ENCODE measurements at regions of chr2 and their contacts with region 1.

Region 1: DNA sequence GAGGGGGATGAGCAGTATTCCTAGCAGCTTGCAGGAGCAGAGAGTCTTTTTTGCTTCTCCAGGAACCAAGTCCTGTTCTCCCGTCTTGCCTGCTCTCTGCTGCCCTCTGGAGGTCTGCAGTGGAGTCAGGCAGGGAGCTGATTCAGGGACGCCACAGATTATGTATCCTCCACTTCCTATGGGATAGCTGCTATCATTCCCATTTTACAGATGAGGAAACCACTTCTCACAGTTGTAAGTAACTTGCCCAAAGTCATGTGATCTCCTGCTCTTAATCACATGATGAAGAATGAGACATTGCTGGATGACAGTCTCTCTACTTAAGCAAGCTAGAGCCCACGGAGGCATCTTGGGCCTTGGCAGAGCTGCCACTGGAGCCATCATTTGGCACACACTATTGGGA is 8.3 kb downstream of the SLC4A5 start:
- DNase-seq: peak; percentile 42
- H3K4me3 ChIP-seq: no peak overlapping the region
- H3K27ac ChIP-seq: no peak overlapping the region
- H3K27me3 ChIP-seq: peaks cover 19% of the 10 kb centered on the region
- CTCF ChIP-seq: peak; percentile 95

Region 2: DNA sequence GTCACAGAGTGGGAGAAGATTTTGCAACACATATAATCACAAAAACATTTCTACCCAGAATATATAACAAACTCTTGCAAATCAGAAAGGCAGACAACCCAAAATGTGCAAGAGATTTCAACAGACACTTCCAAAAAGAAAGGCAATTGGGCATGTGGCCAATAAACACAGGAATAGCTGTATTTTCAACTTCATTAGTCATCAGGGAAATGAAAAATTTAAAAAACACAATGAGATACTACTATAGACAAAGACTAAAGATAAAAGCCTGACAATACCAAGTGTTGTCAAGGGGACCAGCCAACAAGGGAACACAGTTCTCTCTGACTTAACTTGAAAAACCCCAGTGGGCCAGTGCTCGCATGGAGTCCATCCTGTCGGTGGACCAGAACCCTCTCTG is 96.1 kb before region 1 on chr2:
- CTCF ChIA-PET with region 1: interaction called, 22 read pairs
- POLR2A ChIA-PET with region 1: no interaction called
- DNase-seq: no peak
- H3K4me3 ChIP-seq: no peak overlapping the region
- H3K27ac ChIP-seq: no peak overlapping the region
- H3K27me3 ChIP-seq: peaks cover 9% of the 10 kb centered on the region
- CTCF ChIP-seq: no peak

Region 3: DNA sequence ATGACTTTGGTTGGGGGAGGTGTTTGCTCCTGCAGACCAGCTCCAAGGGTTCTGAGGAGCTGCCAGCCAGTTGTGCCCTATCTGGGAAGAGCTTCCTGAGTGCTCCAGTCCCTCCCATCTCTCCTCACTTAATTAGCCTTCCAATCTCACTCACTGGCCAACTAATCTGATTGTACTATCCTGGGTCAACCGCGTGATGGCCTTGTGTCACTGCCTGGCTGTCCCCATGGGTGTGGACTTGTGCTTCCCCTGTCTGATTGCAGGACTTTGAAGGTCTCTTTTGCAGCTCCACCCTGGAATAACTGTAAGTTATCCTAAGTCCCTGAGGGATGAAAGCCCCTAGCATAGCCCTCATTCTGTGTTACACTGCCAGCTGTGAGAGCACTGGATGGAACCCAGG is 56.8 kb before region 1 on chr2:
- CTCF ChIA-PET with region 1: interaction called, 10 read pairs
- POLR2A ChIA-PET with region 1: no interaction called
- DNase-seq: no peak
- H3K4me3 ChIP-seq: no peak overlapping the region
- H3K27ac ChIP-seq: no peak overlapping the region
- H3K27me3 ChIP-seq: peaks cover 39% of the 10 kb centered on the region
- CTCF ChIP-seq: no peak

Region 4: DNA sequence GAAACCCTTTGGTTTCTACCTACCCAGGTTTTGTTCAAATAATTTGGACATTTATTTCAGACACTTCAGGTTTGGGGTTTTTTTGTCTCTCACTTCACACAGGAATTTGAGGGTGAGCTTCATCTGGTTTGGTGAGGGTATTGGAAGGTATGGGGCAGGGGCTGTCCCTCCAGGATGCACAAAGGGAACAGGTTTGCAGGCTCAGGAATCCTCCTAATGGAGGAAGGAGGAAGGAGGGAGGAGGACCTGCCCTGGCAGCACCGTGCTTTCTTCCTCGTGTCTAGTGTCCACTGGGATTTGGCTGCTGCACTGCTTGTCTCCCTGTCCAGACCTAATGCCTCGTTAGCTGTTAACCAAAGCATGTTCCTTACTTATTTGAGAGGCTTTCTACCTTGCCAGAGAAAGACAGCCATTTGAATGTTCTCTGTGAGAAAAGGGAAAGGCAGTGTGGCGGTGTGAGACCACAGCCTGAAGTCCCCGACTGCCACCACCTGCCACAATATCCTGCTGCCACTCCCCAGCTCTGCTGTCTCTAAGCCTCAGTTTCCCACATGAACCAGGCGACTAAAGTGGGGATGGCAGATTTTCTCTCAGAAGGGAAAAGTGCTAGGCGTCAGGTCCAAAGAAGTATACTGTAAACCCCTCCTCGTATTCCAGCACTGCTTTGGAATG is 10.5 kb after region 1 on chr2:
- CTCF ChIA-PET with region 1: interaction called, 22 read pairs
- POLR2A ChIA-PET with region 1: no interaction called
- DNase-seq: no peak
- H3K4me3 ChIP-seq: no peak overlapping the region
- H3K27ac ChIP-seq: no peak overlapping the region
- H3K27me3 ChIP-seq: peaks cover 29% of the 10 kb centered on the region
- CTCF ChIP-seq: no peak

Region 5: DNA sequence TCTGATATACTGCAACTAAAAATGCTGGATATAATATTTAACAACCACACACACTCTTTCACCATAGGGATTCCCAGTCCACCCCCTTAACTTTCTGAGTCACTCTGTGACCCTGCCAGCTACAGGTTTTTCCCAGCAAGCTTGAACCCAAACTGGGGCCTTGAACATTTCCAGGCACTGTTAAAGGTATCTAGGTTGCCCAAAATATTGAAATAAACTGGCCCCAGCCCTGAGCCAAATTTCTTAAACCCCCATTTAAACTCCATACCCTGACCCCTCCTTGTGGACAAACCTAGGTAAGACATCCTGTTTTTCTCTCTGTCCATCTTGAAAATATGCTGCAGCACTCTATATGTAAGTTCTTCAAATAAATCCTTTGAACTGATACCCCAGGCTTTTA is 64.9 kb after region 1 on chr2:
- CTCF ChIA-PET with region 1: interaction called, 12 read pairs
- POLR2A ChIA-PET with region 1: no interaction called
- DNase-seq: no peak
- H3K4me3 ChIP-seq: no peak overlapping the region
- H3K27ac ChIP-seq: no peak overlapping the region
- H3K27me3 ChIP-seq: peaks cover 4% of the 10 kb centered on the region
- CTCF ChIP-seq: peak; percentile 67

Region 6: GRCh38 chr2:74515981-74516633 is 181.2 kb after region 1 on chr2:
- CTCF ChIA-PET with region 1: no interaction called
- POLR2A ChIA-PET with region 1: no interaction called
- DNase-seq: no peak
- H3K4me3 ChIP-seq: peak overlapping the region; percentile 7; the same call in 1 of the 2 replicates
- H3K27ac ChIP-seq: no peak overlapping the region
- H3K27me3 ChIP-seq: peaks cover 89% of the 10 kb centered on the region
- CTCF ChIP-seq: no peak